ENCODE measurements at regions of chr1 and their contacts with region 1.

Region 1: GRCh38 chr1:46303038-46303871 is at the starts of genes LRRC41 and UQCRH:
- DNase-seq: peak; percentile 94
- ATAC-seq: peak; percentile 89
- H3K4me3 Mint-ChIP-seq: peak within 1 kb of the TSS; percentile 99
- H3K27ac Mint-ChIP-seq: peak within 1 kb of the TSS; percentile 99
- H3K4me1 Mint-ChIP-seq: peaks cover 48% of the 10 kb centered on the region
- H3K27me3 Mint-ChIP-seq: no peaks in the 10 kb centered on the region
- CTCF ChIP-seq: no peak
- total RNA-seq, gene LRRC41: 32.1 to 32.2 TPM
- total RNA-seq, gene UQCRH: 391 to 396 TPM

Region 2: GRCh38 chr1:46247436-46248121 is 55.7 kb before region 1 on chr1 and contains the start of gene RAD54L:
- CTCF ChIA-PET with region 1: interaction called, 5 read pairs
- POLR2A ChIA-PET with region 1: interaction called, 16 read pairs
- intact Hi-C with region 1: no loop called
- DNase-seq: peak; percentile 100
- ATAC-seq: peak; percentile 91
- H3K4me3 Mint-ChIP-seq: peak within 1 kb of the TSS; percentile 95
- H3K27ac Mint-ChIP-seq: peak within 1 kb of the TSS; percentile 99
- H3K4me1 Mint-ChIP-seq: peaks cover 24% of the 10 kb centered on the region
- H3K27me3 Mint-ChIP-seq: no peaks in the 10 kb centered on the region
- CTCF ChIP-seq: no peak
- total RNA-seq, gene RAD54L: 64.6 to 65.1 TPM

Region 3: DNA sequence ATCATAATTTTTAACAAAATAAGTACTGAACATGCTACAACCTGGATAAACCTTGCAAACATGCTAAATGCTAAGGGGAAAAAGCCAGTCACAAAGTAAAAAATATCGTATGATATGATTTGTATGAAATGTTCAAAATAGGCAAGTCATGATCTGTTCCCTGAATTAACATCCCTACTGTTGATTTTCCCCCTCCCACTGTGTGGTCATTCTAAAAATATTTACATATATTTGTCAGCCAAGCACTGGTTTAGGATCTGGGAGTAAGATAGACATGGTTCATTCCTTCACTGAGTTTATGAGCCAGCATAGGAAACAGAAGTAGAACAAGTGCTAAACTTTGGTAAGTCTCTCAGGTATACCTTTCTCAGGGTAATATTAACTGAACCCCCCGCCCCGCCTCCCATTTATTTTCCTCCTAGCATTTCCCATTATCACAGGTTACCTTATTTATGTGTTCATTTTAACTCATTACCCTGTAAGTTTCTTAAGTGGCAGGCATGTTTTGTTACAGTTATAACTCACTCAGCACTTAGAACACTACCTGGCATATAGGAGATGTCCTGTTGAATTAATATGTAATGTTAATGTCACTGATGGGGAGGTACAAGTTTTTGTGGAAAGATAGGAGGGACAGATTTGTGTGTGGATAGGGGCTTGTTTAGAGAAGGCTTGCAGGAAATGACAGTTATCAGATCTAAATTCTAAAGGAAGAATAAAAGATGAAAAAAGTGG is 12.6 kb after region 1 on chr1:
- CTCF ChIA-PET with region 1: interaction called, 6 read pairs
- POLR2A ChIA-PET with region 1: interaction called, 15 read pairs
- intact Hi-C with region 1: no loop called
- DNase-seq: no peak
- ATAC-seq: no peak
- H3K4me3 Mint-ChIP-seq: no peak overlapping the region
- H3K27ac Mint-ChIP-seq: no peak overlapping the region
- H3K4me1 Mint-ChIP-seq: peaks cover 2% of the 10 kb centered on the region
- H3K27me3 Mint-ChIP-seq: no peaks in the 10 kb centered on the region
- CTCF ChIP-seq: no peak

Region 4: DNA sequence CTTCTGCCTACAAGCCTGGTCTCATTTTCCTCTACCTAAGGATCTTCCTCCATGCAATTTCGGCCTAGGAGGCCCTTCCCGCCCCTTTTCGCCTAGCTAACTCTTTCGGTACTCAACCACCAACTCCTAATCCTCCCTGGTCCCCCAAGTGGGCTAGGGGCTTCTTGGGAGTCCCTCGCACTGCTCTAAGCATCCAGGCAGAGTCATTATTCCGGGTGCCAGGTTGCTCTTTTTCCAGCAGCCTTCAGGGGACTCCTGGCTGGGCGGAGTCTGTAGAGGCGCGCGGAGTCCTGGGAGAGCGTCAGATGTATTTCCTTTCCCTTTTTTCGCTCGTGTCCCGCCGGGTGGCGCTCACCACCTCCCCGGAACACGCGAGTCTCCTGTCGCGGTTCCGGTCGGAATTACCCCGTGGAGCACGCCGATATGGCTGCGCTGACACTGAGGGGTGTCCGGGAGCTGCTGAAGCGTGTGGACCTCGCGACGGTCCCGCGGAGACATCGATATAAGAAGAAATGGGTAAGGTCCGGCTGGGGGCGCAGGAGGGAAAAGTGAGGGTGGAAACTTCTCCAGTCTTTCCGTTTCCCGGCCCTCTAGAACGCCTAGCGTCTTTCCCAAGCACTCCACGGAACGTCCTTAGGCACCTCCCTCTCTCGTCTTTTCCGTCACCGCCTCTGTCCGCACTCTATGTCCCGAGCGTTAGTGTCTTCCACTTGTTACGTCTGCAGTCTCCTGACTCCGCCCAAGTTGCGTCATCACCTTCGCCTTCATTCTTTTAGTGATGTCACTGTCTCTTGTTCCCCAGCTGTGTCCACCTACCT is 37.4 kb after region 1 on chr1 and contains the start of gene NSUN4:
- CTCF ChIA-PET with region 1: interaction called, 6 read pairs
- POLR2A ChIA-PET with region 1: interaction called, 34 read pairs
- intact Hi-C with region 1: loop called (anchors 5 kb)
- DNase-seq: peak; percentile 92
- ATAC-seq: peak; percentile 95
- H3K4me3 Mint-ChIP-seq: peak within 1 kb of the TSS; percentile 100
- H3K27ac Mint-ChIP-seq: peak within 1 kb of the TSS; percentile 99
- H3K4me1 Mint-ChIP-seq: peaks cover 47% of the 10 kb centered on the region
- H3K27me3 Mint-ChIP-seq: no peaks in the 10 kb centered on the region
- CTCF ChIP-seq: peak; percentile 81
- total RNA-seq, gene NSUN4: 28.5 to 29.3 TPM